ENCODE measurements at regions of chr1 and their contacts with region 1.

Region 1: GRCh38 chr1:53485478-53486394 is 26.5 kb downstream of the DMRTB1 start:
- DNase-seq: peak; percentile 85 to 87 (median 86)
- ATAC-seq: peak; percentile 98
- H3K4me3 ChIP-seq: no peak overlapping the region
- H3K27ac ChIP-seq: no peak overlapping the region
- H3K4me1 ChIP-seq: peaks cover 0 to 4% of the 10 kb centered on the region in 2 experiments; a peak in 1 of 5 replicates
- H3K27me3 ChIP-seq: peaks cover 40 to 86% of the 10 kb centered on the region in 2 experiments; a peak in 4 of 5 replicates
- CTCF ChIP-seq: peak; percentile 95 to 98 (median 96)
- EP300 ChIP-seq: no peak
- POLR2A ChIP-seq: no peak
- RAD21 ChIP-seq: peak; percentile 88 to 98

Region 2: DNA sequence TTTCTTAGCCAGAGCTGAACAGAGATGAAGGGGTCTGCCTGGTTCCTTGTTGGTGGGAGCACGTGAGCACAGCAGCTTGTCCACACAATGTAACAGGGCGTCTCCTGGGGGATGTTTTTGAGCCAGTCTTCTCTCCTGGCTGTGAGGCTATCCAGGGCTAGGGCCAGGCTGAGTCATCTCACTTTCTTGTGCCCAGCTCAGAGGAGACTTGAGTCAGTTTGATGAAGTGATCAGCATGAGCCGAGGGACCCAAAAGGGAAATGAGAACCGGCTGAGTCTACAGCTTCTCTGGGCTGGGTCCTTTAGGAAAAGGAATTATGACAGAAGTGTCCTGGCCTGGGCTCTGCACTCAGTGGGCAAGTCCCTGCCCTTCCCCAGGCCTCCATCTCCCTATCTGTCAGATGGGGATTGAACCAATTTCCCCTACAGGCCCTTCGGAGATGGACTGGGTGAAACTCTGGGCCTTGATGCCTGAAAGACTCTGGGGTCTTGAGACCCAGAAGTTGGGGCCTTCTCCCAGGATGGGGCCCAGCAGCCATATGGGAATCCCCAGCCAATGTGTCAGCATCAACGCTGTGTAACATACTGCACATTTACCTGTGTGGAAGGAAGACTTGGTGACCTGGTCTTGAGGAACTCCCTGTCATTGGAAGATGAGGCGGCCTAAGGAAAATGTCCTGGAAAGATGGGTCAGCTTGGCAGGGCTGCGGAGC is 10.1 kb after region 1 on chr1:
- CTCF ChIA-PET with region 1: no interaction called
- POLR2A ChIA-PET with region 1: no interaction called
- in situ Hi-C with region 1: no loop called
- intact Hi-C with region 1: no loop called
- DNase-seq: no peak
- ATAC-seq: no peak; the same call in 2 of the 3 replicates
- H3K4me3 ChIP-seq: no peak overlapping the region
- H3K27ac ChIP-seq: no peak overlapping the region
- H3K4me1 ChIP-seq: peaks cover 0 to 1% of the 10 kb centered on the region in 2 experiments; a peak in 1 of 5 replicates
- H3K27me3 ChIP-seq: peaks cover 26 to 42% of the 10 kb centered on the region in 2 experiments; a peak in 4 of 5 replicates
- CTCF ChIP-seq: no peak
- EP300 ChIP-seq: no peak
- POLR2A ChIP-seq: no peak
- RAD21 ChIP-seq: no peak

Region 3: DNA sequence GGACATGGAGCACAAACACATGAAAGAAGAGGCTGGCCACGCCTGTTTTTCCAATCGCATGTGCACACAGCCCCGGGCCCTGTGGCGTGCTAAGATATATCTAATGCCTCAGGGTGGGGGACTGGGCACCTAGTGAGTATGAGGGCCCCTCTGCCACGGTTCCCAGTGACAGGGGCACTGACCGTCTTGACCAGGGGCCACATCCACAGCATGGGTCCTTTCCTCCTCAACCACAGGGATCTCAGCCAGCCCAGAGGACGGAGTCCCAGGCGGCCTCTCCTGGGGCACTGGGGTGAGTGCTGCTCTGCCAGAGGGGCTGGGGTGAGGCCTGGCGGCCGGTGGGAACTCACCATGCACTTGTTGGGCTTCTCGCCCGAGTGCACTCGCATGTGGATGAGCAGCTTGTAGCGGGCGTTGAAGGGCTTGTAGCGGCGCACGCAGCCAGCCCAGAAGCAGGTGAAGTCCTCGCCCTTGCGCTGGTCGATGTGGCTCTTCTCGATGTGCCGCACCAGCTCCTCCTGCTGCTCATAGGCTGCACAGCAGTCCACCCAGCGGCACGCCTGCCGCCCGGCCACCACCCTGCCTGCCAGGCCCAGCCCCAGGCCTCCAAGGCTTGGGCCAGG is 108.1 kb after region 1 on chr1:
- CTCF ChIA-PET with region 1: interaction called, 9 read pairs
- POLR2A ChIA-PET with region 1: no interaction called
- in situ Hi-C with region 1: no loop called
- intact Hi-C with region 1: loop called (anchors 1 kb)
- DNase-seq: peak; percentile 62 to 77 (median 72)
- ATAC-seq: peak; percentile 94
- H3K4me3 ChIP-seq: no peak overlapping the region
- H3K27ac ChIP-seq: no peak overlapping the region
- H3K4me1 ChIP-seq: peaks cover 0 to 11% of the 10 kb centered on the region in 2 experiments; a peak in 2 of 5 replicates
- H3K27me3 ChIP-seq: peaks cover 35 to 71% of the 10 kb centered on the region in 2 experiments
- CTCF ChIP-seq: peak; percentile 68 to 87 (median 79)
- EP300 ChIP-seq: no peak
- POLR2A ChIP-seq: no peak
- RAD21 ChIP-seq: peak; percentile 52 to 81; a peak in 3 of 4 replicates

Region 4: GRCh38 chr1:53681977-53682685 is 196.4 kb after region 1 on chr1:
- CTCF ChIA-PET with region 1: interaction called, 3 read pairs
- POLR2A ChIA-PET with region 1: no interaction called
- in situ Hi-C with region 1: no loop called
- intact Hi-C with region 1: loop called (anchors 1 kb)
- DNase-seq: peak; percentile 50 to 60 (median 56)
- ATAC-seq: peak; percentile 75
- H3K4me3 ChIP-seq: no peak overlapping the region
- H3K27ac ChIP-seq: no peak overlapping the region
- H3K4me1 ChIP-seq: peaks cover 0 to 6% of the 10 kb centered on the region in 2 experiments; a peak in 1 of 5 replicates
- H3K27me3 ChIP-seq: peaks cover 51 to 93% of the 10 kb centered on the region in 2 experiments
- CTCF ChIP-seq: peak; percentile 55 to 69 (median 64)
- EP300 ChIP-seq: no peak
- POLR2A ChIP-seq: no peak
- RAD21 ChIP-seq: peak in 1 of 2 experiments; percentile 61; a peak in 2 of 4 replicates

Region 5: DNA sequence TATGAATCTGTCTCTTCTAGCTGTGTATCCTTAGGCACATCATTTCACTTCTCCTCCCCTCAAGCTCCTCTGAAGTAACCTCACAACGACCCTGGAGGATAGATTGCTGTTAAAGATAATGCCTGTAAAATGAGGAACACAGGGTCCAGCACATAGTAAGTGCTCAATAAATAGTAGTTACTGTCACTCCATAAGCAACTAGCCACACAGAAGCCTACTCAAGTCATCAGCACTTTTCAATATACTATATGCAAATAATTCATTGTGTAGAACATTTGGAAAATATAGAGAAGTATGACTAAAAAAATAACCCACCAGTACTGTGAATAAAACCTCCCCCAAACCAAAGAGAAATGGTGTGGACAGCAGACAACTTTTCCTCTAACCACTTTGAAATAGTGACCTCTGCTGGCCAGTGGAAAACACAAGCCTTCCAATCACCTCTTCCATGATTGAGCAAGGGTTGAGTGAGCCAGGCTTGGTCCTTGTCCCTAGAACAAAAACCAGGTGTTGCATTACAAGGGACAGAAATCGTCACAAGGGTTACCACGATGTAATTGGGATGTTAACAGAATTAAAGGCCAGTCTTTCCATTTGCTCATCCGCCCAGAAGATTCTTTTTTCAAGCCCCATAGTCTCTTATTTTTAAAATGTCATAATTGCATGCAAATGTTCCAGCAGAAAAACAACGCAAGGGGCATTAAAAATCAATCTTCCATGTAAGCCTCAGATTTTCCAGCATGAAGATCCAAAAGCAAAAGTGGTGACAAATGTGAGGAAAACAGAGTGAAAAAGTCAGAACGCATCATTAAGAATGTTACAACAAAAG is 269.0 kb after region 1 on chr1:
- CTCF ChIA-PET with region 1: interaction called, 12 read pairs
- POLR2A ChIA-PET with region 1: no interaction called
- in situ Hi-C with region 1: loop called (anchors 5 kb)
- intact Hi-C with region 1: loop called (anchors 1 kb)
- DNase-seq: peak; percentile 65 to 73 (median 68)
- ATAC-seq: peak; percentile 95
- H3K4me3 ChIP-seq: no peak overlapping the region
- H3K27ac ChIP-seq: no peak overlapping the region
- H3K4me1 ChIP-seq: no peaks in the 10 kb centered on the region
- H3K27me3 ChIP-seq: peaks cover 5 to 6% of the 10 kb centered on the region in 2 experiments; a peak in 1 of 5 replicates
- CTCF ChIP-seq: peak; percentile 74 to 83 (median 81)
- EP300 ChIP-seq: no peak
- POLR2A ChIP-seq: no peak
- RAD21 ChIP-seq: peak; percentile 63 to 87